Activated CD4-positive, alpha-beta T cell treated with anti-CD3 and anti-CD28 coated beads for 36 hours (primary cell): ENCODE measurements at regions of chr15 and their contacts with region 1.

Region 1: DNA sequence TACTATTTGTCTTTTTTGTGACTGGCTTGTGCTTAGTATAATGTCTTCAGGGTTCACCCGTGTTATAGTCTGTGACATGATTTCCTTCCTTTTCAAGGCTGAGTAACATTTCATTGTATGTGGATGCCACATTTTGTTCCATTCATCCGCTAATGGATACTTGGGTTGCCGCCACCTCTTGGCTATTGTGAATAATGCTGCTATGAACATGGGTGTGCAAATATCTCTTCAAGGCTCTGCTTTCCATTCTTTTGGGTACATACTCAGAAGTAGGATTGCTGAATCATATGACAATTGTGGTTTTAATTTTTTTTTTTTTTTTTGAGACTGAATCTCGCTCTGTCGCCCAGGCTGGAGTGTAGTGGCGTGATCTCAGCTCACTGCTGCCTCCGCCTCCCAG is 15.4 kb downstream of the CRTC3 start:
- DNase-seq: peak; percentile 49
- ATAC-seq: peak; percentile 74
- H3K4me3 Mint-ChIP-seq: no peak overlapping the region
- H3K27ac Mint-ChIP-seq: peak overlapping the region; percentile 48
- H3K4me1 Mint-ChIP-seq: peaks cover 61% of the 10 kb centered on the region
- H3K27me3 Mint-ChIP-seq: no peaks in the 10 kb centered on the region

Region 2: GRCh38 chr15:90560229-90560776 is 15.2 kb after region 1 on chr15:
- CTCF ChIA-PET with region 1: interaction called, 5 read pairs
- POLR2A ChIA-PET with region 1: interaction called, 3 read pairs
- intact Hi-C with region 1: loop called in 1 of 2 experiments (anchors 2 kb)
- DNase-seq: no peak
- ATAC-seq: no peak
- H3K4me3 Mint-ChIP-seq: no peak overlapping the region
- H3K27ac Mint-ChIP-seq: no peak overlapping the region
- H3K4me1 Mint-ChIP-seq: peaks cover 85% of the 10 kb centered on the region
- H3K27me3 Mint-ChIP-seq: no peaks in the 10 kb centered on the region

Region 3: DNA sequence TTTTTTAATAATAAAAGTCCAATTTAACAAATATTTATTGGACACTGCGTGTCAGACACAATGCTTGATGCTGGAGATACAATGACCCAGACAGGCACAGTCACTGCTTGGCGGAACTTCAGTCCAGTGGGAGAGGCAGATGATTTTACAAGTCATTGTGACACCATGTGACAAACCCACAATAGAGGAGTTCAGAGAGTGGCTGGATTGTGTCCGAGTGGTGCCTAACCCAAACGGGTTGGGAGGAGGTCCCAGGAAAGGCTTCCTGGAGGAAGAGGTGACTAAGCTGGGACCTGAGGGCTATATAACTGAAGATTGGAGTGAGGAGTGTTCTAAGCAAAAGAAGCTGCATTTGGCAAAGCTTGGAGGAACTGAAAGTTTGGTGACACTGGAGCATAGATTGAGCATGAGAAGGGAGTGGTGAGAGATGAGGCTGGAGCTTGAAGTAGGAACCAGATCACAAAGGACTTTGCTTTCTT is 26.0 kb after region 1 on chr15:
- CTCF ChIA-PET with region 1: no interaction called
- POLR2A ChIA-PET with region 1: no interaction called
- intact Hi-C with region 1: loop called in 1 of 2 experiments (anchors 2 kb)
- DNase-seq: no peak
- ATAC-seq: no peak
- H3K4me3 Mint-ChIP-seq: no peak overlapping the region
- H3K27ac Mint-ChIP-seq: peak overlapping the region; percentile 28
- H3K4me1 Mint-ChIP-seq: peaks cover 86% of the 10 kb centered on the region
- H3K27me3 Mint-ChIP-seq: no peaks in the 10 kb centered on the region

Region 4: GRCh38 chr15:90931737-90932659 is 386.9 kb after region 1 on chr15 and contains the start of gene HDDC3:
- CTCF ChIA-PET with region 1: no interaction called
- POLR2A ChIA-PET with region 1: no interaction called
- intact Hi-C with region 1: no loop called
- DNase-seq: peak; percentile 96
- ATAC-seq: peak; percentile 68
- H3K4me3 Mint-ChIP-seq: peak within 1 kb of the TSS; percentile 99
- H3K27ac Mint-ChIP-seq: peak within 1 kb of the TSS; percentile 99
- H3K4me1 Mint-ChIP-seq: peaks cover 47% of the 10 kb centered on the region
- H3K27me3 Mint-ChIP-seq: no peaks in the 10 kb centered on the region
- total RNA-seq, gene HDDC3: 34.2 to 41.2 TPM